ENCODE measurements at regions of chr9 and their contacts with region 1.

Region 1: DNA sequence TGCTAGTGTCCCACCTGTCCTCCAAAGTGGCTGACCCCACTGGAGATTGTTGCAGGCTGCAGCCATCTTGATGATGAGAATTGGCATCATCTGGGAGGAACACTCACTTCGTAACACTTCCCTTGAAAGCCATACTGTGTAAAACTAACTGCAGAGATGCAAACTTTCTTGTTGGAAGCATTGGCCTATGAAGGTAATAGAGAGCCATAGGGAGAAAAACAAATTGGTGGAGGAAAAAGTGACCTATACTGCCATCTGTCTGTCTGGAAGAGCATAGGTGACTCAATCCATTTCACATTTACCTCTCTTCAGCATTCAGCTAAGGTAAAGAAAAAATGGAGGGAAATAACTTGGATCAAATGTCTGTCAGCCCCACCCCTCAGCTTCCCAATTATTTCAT is 473.4 kb downstream of the NTRK2 start:
- DNase-seq: no peak
- H3K4me3 ChIP-seq: no peak overlapping the region
- H3K27ac ChIP-seq: no peak overlapping the region
- H3K4me1 ChIP-seq: peaks cover 0 to 6% (median 0%) of the 10 kb centered on the region in 4 experiments; a peak in 1 of 7 replicates
- H3K27me3 ChIP-seq: no peaks in the 10 kb centered on the region
- CTCF ChIP-seq: peak in 2 of 3 experiments; percentile 46 to 72; a peak in 2 of 4 replicates
- EP300 ChIP-seq: no peak
- POLR2A ChIP-seq: no peak
- RAD21 ChIP-seq: peak; percentile 72 to 73

Region 2: GRCh38 chr9:84997472-84997871 is 145.5 kb before region 1 on chr9:
- CTCF ChIA-PET with region 1: interaction called, 26 read pairs
- POLR2A ChIA-PET with region 1: no interaction called
- DNase-seq: no peak
- H3K4me3 ChIP-seq: no peak overlapping the region
- H3K27ac ChIP-seq: no peak overlapping the region
- H3K4me1 ChIP-seq: peaks cover 0 to 10% (median under 1%) of the 10 kb centered on the region in 4 experiments; a peak in 4 of 7 replicates
- H3K27me3 ChIP-seq: no peaks in the 10 kb centered on the region
- CTCF ChIP-seq: peak; percentile 13 to 42 (median 23); a peak in 3 of 4 replicates
- EP300 ChIP-seq: no peak
- POLR2A ChIP-seq: no peak
- RAD21 ChIP-seq: peak; percentile 43 to 54

Region 3: GRCh38 chr9:85118990-85119755 is 23.8 kb before region 1 on chr9:
- CTCF ChIA-PET with region 1: interaction called, 22 read pairs
- POLR2A ChIA-PET with region 1: no interaction called
- DNase-seq: no peak
- H3K4me3 ChIP-seq: no peak overlapping the region
- H3K27ac ChIP-seq: no peak overlapping the region
- H3K4me1 ChIP-seq: no peaks in the 10 kb centered on the region
- H3K27me3 ChIP-seq: no peaks in the 10 kb centered on the region
- CTCF ChIP-seq: no peak
- EP300 ChIP-seq: no peak
- POLR2A ChIP-seq: no peak
- RAD21 ChIP-seq: no peak

Region 4: DNA sequence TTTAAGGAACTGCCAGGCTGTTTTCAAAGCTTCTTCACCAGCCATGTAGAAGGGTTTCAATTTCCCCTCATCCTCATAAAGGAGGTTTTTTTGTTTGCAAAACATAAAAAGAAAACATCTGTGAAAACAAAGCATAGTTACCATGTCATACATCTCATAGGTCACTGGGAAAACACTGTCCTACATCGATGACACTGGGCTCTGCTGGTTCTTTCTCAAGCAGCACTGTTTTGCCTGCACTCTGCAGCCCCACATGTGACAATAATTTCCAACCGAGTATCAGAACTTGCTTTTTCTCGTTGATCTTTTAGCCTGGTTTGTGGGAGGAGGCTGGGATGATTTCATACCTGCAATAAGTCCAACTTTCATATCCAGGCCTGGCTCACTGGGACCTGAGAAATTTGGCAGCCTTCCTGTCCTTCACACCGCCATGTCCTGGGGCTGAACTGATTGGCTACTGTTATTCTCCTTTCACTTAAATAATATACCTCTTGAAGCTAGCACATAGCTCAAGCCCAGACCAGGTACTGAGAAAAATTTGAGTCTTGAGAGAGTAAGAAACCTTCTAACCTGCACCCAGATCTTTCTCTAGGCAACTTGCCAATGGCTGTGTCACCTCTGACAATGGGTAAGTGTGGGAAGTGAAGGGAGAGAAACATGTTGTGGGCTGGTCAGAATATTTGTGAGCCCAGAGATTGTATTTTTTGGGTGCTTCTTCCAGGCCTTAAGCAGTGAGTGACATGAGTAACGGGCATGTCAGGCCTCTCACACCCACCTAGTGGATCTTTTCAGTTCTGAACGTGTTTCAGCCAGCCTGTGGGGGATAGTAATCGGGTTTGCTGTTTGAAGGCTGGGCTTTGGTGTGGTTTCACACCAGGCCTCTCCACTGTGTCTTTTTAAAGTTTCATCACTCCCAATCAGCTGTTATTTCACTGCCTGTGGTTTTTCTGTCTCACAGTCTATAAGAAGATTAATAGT is 29.3 kb after region 1 on chr9:
- CTCF ChIA-PET with region 1: interaction called, 12 read pairs
- POLR2A ChIA-PET with region 1: no interaction called
- DNase-seq: no peak
- H3K4me3 ChIP-seq: no peak overlapping the region
- H3K27ac ChIP-seq: no peak overlapping the region
- H3K4me1 ChIP-seq: peaks cover 0 to under 1% (median 0%) of the 10 kb centered on the region in 4 experiments; a peak in 2 of 7 replicates
- H3K27me3 ChIP-seq: no peaks in the 10 kb centered on the region
- CTCF ChIP-seq: no peak
- EP300 ChIP-seq: no peak
- POLR2A ChIP-seq: no peak
- RAD21 ChIP-seq: 0 out of 4 replicates have a peak, but pooled peaks of 1 of the 2 experiments have one; percentile 9

Region 5: GRCh38 chr9:85258823-85259370 is 115.9 kb after region 1 on chr9:
- CTCF ChIA-PET with region 1: interaction called, 21 read pairs
- POLR2A ChIA-PET with region 1: no interaction called
- DNase-seq: peak; percentile 47 to 67
- H3K4me3 ChIP-seq: no peak overlapping the region
- H3K27ac ChIP-seq: no peak overlapping the region
- H3K4me1 ChIP-seq: no peaks in the 10 kb centered on the region
- H3K27me3 ChIP-seq: no peaks in the 10 kb centered on the region
- CTCF ChIP-seq: peak; percentile 87 to 98 (median 91)
- EP300 ChIP-seq: no peak
- POLR2A ChIP-seq: no peak
- RAD21 ChIP-seq: peak; percentile 98 to 99

Measured in H1 (cell line).